Breast epithelium (tissue), 4 donors: ENCODE measurements at regions of chr10 and their contacts with region 1.

Region 1: GRCh38 chr10:75880031-75880775 is 448.8 kb downstream of the LRMDA start:
- DNase-seq: no peak
- H3K4me3 ChIP-seq: no peak overlapping the region
- H3K27ac ChIP-seq: no peak overlapping the region
- H3K4me1 ChIP-seq: no peaks in the 10 kb centered on the region
- H3K27me3 ChIP-seq: no peaks in the 10 kb centered on the region
- CTCF ChIP-seq: no peak
- POLR2A ChIP-seq: no peak

Region 2: GRCh38 chr10:75487087-75487754 is 393.0 kb before region 1 on chr10:
- intact Hi-C with region 1: loop called (anchors 5 kb)
- DNase-seq: no peak
- H3K4me3 ChIP-seq: no peak overlapping the region
- H3K27ac ChIP-seq: no peak overlapping the region
- H3K4me1 ChIP-seq: no peaks in the 10 kb centered on the region
- H3K27me3 ChIP-seq: no peaks in the 10 kb centered on the region
- CTCF ChIP-seq: no peak
- POLR2A ChIP-seq: no peak

Region 3: GRCh38 chr10:75611172-75611971 is 268.8 kb before region 1 on chr10:
- intact Hi-C with region 1: no loop called
- DNase-seq: no peak
- H3K4me3 ChIP-seq: no peak overlapping the region
- H3K27ac ChIP-seq: no peak overlapping the region
- H3K4me1 ChIP-seq: no peaks in the 10 kb centered on the region
- H3K27me3 ChIP-seq: no peaks in the 10 kb centered on the region
- CTCF ChIP-seq: no peak
- POLR2A ChIP-seq: no peak

Region 4: GRCh38 chr10:75910032-75910431 is 29.8 kb after region 1 on chr10:
- intact Hi-C with region 1: no loop called
- DNase-seq: no peak
- H3K4me3 ChIP-seq: no peak overlapping the region
- H3K27ac ChIP-seq: no peak overlapping the region
- H3K4me1 ChIP-seq: no peaks in the 10 kb centered on the region
- H3K27me3 ChIP-seq: no peaks in the 10 kb centered on the region
- CTCF ChIP-seq: peak in 2 of 3 donors; percentile 46
- POLR2A ChIP-seq: no peak